ENCODE measurements at regions of chr14 and their contacts with region 1.

Region 1: GRCh38 chr14:50726372-50727107 is 58.4 kb upstream of the SAV1 start:
- DNase-seq: peak; percentile 46
- ATAC-seq: peak; percentile 96
- H3K4me3 Mint-ChIP-seq: peak overlapping the region; percentile 30
- H3K27ac Mint-ChIP-seq: peak overlapping the region; percentile 82
- H3K4me1 Mint-ChIP-seq: peaks cover 21% of the 10 kb centered on the region
- H3K27me3 Mint-ChIP-seq: no peaks in the 10 kb centered on the region

Region 2: GRCh38 chr14:50714450-50715073 is 12.0 kb before region 1 on chr14:
- CTCF ChIA-PET with region 1: interaction called, 35 read pairs
- POLR2A ChIA-PET with region 1: interaction called, 3 read pairs
- DNase-seq: no peak
- ATAC-seq: peak; percentile 64
- H3K4me3 Mint-ChIP-seq: no peak overlapping the region
- H3K27ac Mint-ChIP-seq: no peak overlapping the region
- H3K4me1 Mint-ChIP-seq: no peaks in the 10 kb centered on the region
- H3K27me3 Mint-ChIP-seq: peaks cover 7% of the 10 kb centered on the region

Region 3: DNA sequence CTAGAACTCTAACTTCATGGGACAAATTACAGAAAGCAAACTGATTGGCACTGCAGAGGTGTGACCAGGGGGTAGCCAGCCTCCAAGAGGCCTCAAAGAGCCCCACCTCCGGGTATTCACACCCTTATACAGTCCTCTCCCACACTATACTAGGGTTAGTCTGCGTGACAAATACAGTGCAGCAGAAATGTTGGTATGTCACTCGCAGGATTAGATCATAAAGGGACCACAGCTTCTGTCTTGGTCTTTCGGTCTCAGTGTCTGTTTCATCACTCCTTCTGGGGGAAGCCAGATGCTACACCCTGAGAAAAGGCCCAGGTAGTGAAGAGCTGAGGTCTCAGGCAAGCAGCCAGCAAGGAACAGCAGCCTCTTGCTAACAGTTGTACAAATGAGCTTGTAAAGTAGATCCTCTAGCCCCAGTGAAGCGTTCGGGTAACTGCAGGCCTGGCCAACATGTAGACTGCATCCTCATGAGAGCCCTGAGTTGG is 10.4 kb after region 1 on chr14:
- CTCF ChIA-PET with region 1: interaction called, 14 read pairs
- POLR2A ChIA-PET with region 1: interaction called, 5 read pairs
- DNase-seq: peak; percentile 35
- ATAC-seq: peak; percentile 71
- H3K4me3 Mint-ChIP-seq: no peak overlapping the region
- H3K27ac Mint-ChIP-seq: peak overlapping the region; percentile 72
- H3K4me1 Mint-ChIP-seq: peaks cover 36% of the 10 kb centered on the region
- H3K27me3 Mint-ChIP-seq: no peaks in the 10 kb centered on the region

Region 4: GRCh38 chr14:50813544-50813863 is 87.0 kb after region 1 on chr14:
- CTCF ChIA-PET with region 1: no interaction called
- POLR2A ChIA-PET with region 1: no interaction called
- DNase-seq: peak; percentile 44
- ATAC-seq: peak; percentile 83
- H3K4me3 Mint-ChIP-seq: peak overlapping the region; percentile 72
- H3K27ac Mint-ChIP-seq: peak overlapping the region; percentile 92
- H3K4me1 Mint-ChIP-seq: peaks cover 48% of the 10 kb centered on the region
- H3K27me3 Mint-ChIP-seq: no peaks in the 10 kb centered on the region

Region 5: DNA sequence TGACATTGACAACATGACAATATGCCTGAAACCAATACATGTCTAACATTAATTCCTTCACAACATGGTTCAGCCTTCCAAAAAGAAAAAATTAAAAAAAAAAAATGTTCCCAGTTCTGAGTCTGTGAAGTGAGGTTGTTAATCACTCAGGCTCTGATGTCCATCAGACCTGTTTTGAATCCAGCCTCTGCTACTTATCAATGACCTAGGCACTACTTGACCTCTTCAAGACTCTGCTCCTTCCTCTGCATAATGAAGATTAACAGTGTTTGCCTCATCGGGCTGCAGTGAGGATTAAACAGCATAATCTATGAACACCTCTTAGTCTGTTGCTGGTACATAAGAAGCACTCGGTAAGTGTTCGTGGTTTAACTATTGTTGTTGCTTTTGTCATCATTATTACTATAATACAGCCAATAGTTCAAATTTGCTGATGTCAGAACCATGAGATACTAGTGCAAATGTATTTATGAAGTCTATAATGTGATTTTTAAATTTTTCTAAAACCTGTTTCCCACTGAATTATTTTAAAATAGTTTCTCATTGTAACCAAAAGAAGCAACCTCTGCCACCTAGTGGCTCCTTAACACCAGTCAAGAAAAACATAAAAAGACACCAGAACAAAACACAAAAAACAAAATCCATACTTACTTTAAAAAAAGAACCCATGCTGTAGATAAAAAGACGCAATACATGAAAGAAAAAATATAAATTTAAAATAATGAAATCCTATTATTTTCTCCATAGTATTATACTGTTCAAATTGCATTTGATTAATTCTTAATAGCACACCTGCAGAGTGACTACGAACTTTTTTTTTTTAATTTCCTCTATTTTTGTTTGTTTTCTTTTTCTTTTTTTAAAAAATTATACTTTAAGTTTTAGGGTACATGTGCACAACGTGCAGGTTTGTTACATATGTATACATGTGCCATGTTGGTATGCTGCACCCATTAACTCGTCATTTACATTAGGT is 493.2 kb after region 1 on chr14:
- CTCF ChIA-PET with region 1: no interaction called
- POLR2A ChIA-PET with region 1: no interaction called
- DNase-seq: no peak
- ATAC-seq: no peak
- H3K4me3 Mint-ChIP-seq: no peak overlapping the region
- H3K27ac Mint-ChIP-seq: no peak overlapping the region
- H3K4me1 Mint-ChIP-seq: no peaks in the 10 kb centered on the region
- H3K27me3 Mint-ChIP-seq: no peaks in the 10 kb centered on the region